ENCODE measurements at regions of chr2 and their contacts with region 1.

Region 1: DNA sequence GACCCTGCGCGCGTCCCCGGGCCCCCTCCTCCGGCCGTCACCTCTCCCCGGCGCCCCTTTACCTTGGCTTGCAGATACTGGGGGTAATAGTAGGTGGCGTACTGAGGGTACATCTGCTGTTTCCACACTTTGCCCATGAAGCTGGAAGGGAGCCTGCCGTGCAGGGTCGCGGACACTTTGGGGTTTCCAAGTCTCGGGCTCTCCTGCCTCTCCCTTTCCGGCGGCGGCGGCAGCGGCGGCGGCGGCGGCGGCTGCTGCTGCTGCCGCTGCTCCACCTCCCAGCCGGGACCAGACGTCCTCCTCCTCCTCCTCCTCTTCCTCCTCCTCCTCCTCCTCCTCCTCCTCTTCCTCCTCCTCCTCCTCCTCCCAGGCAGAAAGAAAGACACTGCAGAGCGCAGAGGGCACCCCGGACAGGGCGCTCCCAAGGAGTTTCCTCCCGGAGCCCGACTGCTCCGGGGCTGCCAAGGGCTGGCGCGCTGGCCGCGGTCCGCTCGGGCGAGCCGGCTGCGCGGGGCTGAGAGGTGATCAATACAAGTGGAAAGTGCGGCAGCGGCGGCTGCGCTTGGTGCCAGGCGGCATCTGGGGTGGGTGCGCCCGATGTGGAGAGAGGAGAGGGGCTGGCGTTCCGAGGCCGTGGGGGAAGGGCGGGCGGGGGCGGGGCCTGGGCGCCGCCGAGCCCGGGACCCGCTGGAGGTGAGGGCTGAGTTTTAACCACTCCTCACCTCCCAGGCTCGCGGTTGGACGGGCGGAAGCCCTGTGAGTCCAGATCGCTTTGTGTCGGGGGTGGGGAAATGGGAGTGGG is at the start of gene RBMS1:
- DNase-seq: no peak
- H3K4me3 ChIP-seq: peak within 1 kb of the TSS; percentile 81 to 95 (median 91)
- H3K27ac ChIP-seq: peak within 1 kb of the TSS; percentile 95 to 99 (median 98)
- H3K4me1 ChIP-seq: peaks cover 7 to 44% (median 40%) of the 10 kb centered on the region in 4 donors
- H3K27me3 ChIP-seq: no peaks in the 10 kb centered on the region
- CTCF ChIP-seq: no peak
- EP300 ChIP-seq: no peak
- POLR2A ChIP-seq: no peak
- total RNA-seq, gene RBMS1: 86.8 to 116 (median 93.1) TPM

Region 2: GRCh38 chr2:160269803-160270570 is 223.4 kb before region 1 on chr2:
- intact Hi-C with region 1: loop called (anchors 5 kb)
- DNase-seq: peak; percentile 97
- H3K4me3 ChIP-seq: peak overlapping the region; percentile 53 to 63 (median 58)
- H3K27ac ChIP-seq: peak overlapping the region; percentile 88 to 94 (median 94)
- H3K4me1 ChIP-seq: peaks cover 23 to 31% (median 28%) of the 10 kb centered on the region in 4 donors
- H3K27me3 ChIP-seq: no peaks in the 10 kb centered on the region
- CTCF ChIP-seq: peak; percentile 59 to 77 (median 66)
- EP300 ChIP-seq: no peak
- POLR2A ChIP-seq: peak; percentile 41

Region 3: GRCh38 chr2:160406591-160407392 is 86.6 kb before region 1 on chr2:
- intact Hi-C with region 1: loop called (anchors 5 kb)
- DNase-seq: peak; percentile 93
- H3K4me3 ChIP-seq: peak overlapping the region; percentile 94 to 100 (median 98)
- H3K27ac ChIP-seq: peak overlapping the region; percentile 96 to 99 (median 98)
- H3K4me1 ChIP-seq: peaks cover 69 to 79% (median 74%) of the 10 kb centered on the region in 4 donors
- H3K27me3 ChIP-seq: no peaks in the 10 kb centered on the region
- CTCF ChIP-seq: no peak
- EP300 ChIP-seq: no peak
- POLR2A ChIP-seq: no peak

Region 4: GRCh38 chr2:160454070-160454797 is 39.2 kb before region 1 on chr2:
- intact Hi-C with region 1: no loop called
- DNase-seq: no peak
- H3K4me3 ChIP-seq: no peak overlapping the region
- H3K27ac ChIP-seq: peak overlapping the region in 3 of 4 donors; percentile 21 to 51 (median 43)
- H3K4me1 ChIP-seq: peaks cover 59 to 80% (median 77%) of the 10 kb centered on the region in 4 donors
- H3K27me3 ChIP-seq: no peaks in the 10 kb centered on the region
- CTCF ChIP-seq: no peak
- EP300 ChIP-seq: no peak
- POLR2A ChIP-seq: no peak

Region 5: GRCh38 chr2:160582490-160583145 is 89.2 kb after region 1 on chr2:
- intact Hi-C with region 1: loop called (anchors 5 kb)
- DNase-seq: no peak
- H3K4me3 ChIP-seq: no peak overlapping the region
- H3K27ac ChIP-seq: peak overlapping the region; percentile 69 to 75 (median 72)
- H3K4me1 ChIP-seq: peaks cover 15 to 42% (median 40%) of the 10 kb centered on the region in 4 donors
- H3K27me3 ChIP-seq: no peaks in the 10 kb centered on the region
- CTCF ChIP-seq: peak in 1 of 3 experiments; percentile 13
- EP300 ChIP-seq: no peak
- POLR2A ChIP-seq: no peak

Region 6: DNA sequence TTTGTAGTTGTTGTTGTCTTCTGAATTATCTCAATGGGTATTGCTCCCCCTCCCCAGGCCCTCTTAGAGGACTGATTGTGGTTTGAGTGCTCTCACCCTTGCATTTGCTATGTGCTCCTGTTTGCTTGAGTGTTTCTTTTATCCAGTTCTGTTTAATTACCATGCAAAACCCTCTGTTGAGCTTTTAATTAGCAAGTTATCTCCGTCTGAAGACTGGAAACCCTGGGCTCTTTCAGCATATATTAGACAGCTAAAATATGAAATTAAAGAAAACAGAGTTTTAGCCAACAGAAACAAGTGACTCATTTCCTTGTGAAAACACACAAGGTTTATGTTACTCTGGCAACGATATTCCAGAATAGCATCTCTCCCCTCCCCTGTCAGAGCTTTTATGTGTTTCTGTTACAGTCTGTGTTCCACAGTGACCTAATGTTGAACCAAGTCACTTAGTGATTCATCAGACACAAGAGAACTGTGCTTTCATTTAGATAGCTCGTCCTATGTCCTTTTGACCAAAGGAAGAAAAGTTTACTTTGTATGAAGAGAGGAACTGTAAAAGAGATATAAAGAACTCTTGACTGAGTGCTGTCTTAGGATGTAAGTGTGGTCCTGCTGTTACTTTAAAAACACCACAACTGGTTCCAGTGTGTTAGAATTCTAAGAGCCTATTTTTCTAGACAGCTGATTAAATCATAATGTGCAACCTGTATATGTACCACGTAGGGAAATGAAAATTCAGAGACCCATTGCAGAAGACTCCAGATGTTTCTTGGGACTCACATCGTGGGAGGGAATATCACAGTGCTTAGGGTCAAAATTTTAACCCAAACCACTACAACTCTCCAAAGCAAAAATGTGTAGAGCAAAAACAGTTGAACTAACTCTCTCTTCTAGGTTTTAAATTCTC is 173.0 kb after region 1 on chr2:
- intact Hi-C with region 1: loop called (anchors 10 kb)
- DNase-seq: no peak
- H3K4me3 ChIP-seq: peak overlapping the region; percentile 7 to 31 (median 22)
- H3K27ac ChIP-seq: peak overlapping the region; percentile 76 to 84 (median 81)
- H3K4me1 ChIP-seq: peaks cover 20 to 36% (median 31%) of the 10 kb centered on the region in 4 donors
- H3K27me3 ChIP-seq: no peaks in the 10 kb centered on the region
- CTCF ChIP-seq: no peak
- EP300 ChIP-seq: no peak
- POLR2A ChIP-seq: no peak

Region 7: DNA sequence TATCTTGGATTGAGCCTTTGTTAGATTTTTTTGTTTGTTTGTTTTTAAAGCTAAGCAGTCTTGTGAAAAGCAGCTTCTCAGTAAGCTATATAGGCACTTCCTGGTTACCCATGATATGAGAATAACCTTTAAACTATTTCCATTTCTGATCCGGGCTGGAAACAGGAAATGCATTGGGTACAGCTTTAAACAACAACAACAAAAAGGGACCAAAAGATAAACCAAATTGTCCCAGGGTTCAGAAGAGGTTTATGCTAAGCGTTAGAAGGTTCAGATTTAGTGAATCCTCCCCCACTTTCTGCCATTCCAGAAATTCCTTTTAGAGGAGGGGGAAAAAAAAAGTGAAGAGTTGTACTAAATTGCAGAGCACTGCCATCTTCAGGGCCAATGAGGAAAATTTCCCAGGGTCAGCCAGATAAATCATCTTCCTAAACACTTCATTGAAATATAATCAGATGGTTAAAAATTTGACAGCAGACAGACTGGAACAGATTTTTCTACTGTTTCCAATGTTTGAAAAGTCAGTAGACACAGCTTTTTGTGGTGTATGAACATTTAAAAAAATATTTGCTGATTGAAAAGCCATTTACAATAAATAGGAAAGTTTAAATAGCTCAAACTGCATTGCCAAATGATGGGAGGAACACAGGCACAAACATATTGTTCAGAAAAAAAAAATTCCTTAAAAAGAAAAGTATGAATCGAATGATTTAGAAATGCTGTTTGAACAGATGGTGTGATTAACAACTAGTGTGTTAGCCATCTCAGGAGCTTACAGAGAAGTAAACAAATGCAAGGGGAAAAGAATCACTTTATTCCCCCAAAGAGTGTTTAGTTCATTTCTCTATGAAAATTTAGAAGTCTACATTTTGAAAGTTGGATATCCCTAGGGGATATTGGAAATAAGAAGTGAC is 476.9 kb after region 1 on chr2:
- intact Hi-C with region 1: loop called (anchors 5 kb)
- DNase-seq: no peak
- H3K4me3 ChIP-seq: peak overlapping the region; percentile 21 to 38 (median 34)
- H3K27ac ChIP-seq: peak overlapping the region; percentile 33 to 68 (median 44)
- H3K4me1 ChIP-seq: peaks cover 9 to 21% (median 12%) of the 10 kb centered on the region in 4 donors
- H3K27me3 ChIP-seq: no peaks in the 10 kb centered on the region
- CTCF ChIP-seq: peak; percentile 74 to 87 (median 84)
- EP300 ChIP-seq: no peak
- POLR2A ChIP-seq: no peak

Measured in esophagus muscularis mucosa (tissue), 4 donors.